ENCODE measurements at regions of chr12 and their contacts with region 1.

Region 1: GRCh38 chr12:28097221-28097620 is 93.0 kb upstream of the CCDC91 start:
- DNase-seq: no peak
- ATAC-seq: no peak
- H3K4me3 ChIP-seq: no peak overlapping the region
- H3K27ac ChIP-seq: no peak overlapping the region
- H3K4me1 ChIP-seq: no peaks in the 10 kb centered on the region
- H3K27me3 ChIP-seq: peaks cover 0 to 3% (median 0%) of the 10 kb centered on the region in 7 donors
- CTCF ChIP-seq: no peak

Region 2: DNA sequence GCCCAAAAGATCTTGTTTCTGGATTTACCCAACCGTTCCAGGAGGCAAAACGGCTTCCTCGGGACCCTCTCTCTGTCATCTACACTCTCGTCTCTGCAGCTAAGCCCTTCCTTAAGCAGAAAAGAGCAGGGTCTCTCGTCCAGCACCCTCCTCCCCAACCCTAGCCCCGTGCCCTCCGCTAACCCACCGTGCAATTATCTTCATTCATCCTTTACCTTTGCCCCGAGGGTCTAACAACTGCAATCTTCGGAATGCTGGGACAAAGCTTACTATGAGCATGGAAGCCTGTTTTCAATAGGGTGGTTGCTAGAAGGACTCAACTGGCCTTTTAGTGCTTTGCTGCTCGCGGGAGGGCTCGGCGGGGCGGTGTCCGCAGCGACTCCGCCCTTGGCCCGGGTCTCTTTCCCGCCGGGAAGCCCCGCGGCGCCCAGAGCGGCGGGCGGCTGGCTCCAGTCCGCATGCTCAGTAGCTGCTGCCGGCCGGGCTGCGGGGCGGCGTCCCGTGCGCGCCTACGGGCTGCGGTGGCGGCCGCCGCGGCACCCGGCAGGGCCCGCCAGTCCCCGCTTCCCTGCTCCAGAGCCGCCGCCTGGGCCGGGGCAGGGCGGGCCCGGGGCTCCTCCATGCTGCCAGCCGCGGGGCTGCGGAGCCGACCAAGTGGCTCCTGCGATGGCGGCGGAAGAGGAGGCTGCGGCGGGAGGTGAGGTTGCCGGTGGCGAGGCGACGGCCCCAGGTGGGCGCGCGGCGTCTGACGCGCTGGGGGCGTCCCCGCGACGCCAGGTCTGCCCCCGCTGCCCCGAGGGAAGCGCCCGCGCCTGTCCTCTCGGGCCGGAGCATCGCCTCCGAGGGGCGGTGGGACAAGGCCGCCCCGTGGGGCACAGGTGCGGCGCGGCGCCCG is 764.6 kb before region 1 on chr12 and contains the start of gene BMAL2:
- intact Hi-C with region 1: no loop called
- DNase-seq: peak; percentile 11 to 46
- ATAC-seq: peak; percentile 60 to 82 (median 66)
- H3K4me3 ChIP-seq: peak within 1 kb of the TSS; percentile 57 to 85 (median 68)
- H3K27ac ChIP-seq: peak within 1 kb of the TSS in 2 of 10 donors; percentile 40 to 69
- H3K4me1 ChIP-seq: peaks cover 0 to 32% (median 9%) of the 10 kb centered on the region in 9 donors
- H3K27me3 ChIP-seq: peaks cover 0 to 21% (median 0%) of the 10 kb centered on the region in 7 donors
- CTCF ChIP-seq: no peak
- total RNA-seq, gene BMAL2: 1.1 to 9.4 (median 2.8) TPM

Region 3: DNA sequence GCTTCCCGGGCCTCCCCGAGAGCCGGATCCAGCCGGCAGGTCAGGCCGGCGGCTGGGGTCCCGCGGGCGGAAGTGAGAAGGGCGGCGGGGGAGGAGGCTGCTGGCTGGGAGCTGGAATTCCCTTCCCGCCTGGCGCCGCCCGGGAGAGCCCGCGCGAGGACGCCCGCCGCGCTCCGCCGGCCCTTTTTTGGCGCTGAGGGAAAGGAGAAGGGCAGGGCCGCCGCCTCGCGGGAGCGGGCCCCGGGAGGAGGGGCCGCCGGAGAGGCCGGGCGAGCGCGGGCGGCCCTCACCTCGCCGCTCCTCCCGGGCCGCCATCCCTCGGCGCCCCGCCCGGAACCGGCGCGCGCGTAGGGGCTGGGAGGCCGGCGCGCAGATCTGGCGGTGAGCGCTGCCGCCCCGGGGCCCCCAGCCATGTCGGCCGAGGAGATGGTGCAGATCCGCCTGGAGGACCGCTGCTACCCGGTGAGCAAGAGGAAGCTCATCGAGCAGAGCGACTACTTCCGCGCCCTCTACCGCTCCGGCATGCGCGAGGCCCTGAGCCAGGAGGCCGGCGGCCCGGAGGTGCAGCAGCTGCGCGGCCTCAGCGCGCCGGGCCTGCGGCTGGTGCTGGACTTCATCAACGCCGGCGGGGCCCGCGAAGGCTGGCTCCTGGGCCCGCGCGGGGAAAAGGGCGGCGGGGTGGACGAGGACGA is 317.2 kb before region 1 on chr12 and contains the starts of genes KLHL42 and MANSC4:
- intact Hi-C with region 1: no loop called
- DNase-seq: peak; percentile 74 to 78
- ATAC-seq: peak; percentile 88 to 96 (median 90)
- H3K4me3 ChIP-seq: peak within 1 kb of the TSS; percentile 72 to 95 (median 83)
- H3K27ac ChIP-seq: peak within 1 kb of the TSS; percentile 70 to 94 (median 89)
- H3K4me1 ChIP-seq: peaks cover 0 to 35% (median 28%) of the 10 kb centered on the region in 9 donors
- H3K27me3 ChIP-seq: no peaks in the 10 kb centered on the region
- CTCF ChIP-seq: peak in 4 of 9 donors; percentile 14 to 32 (median 22)
- total RNA-seq, gene KLHL42: 4.6 to 10.9 (median 6.7) TPM
- total RNA-seq, gene MANSC4: not detected

Region 4: DNA sequence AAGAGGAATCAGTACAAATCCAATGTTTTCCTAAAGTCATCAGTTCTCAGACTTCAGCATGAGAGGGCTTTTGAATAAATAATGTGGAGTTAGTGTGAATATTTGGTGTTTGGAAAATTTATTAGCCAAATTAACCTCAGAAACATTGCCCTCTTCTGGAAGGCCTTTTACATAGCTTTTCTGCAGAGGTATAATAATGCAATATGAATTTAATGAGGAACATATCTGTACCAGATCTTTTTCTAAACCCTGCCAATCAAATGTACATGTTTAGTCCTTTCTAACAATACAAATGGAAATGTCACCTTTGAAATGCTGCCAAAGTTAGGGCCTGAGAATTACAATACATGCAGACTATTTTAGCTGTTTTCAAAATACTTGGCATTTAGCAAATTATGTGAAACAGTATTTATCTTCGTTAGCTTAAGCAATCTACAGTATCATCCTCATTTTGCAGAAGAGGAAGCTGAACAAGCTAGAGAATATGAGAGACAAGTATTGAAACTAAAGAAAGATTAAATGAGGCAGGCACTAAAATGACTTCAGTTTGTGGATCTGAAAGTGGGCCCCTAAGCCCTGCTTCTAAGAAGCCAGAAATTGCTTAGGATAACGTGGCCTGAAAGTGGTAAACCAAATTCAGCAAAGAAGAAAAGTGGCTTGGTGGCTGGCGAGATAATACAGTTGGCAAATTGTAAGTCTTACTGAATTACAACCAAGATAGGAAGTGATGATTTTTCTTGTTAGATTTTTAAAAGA is 256.8 kb before region 1 on chr12:
- intact Hi-C with region 1: no loop called
- DNase-seq: no peak
- ATAC-seq: no peak
- H3K4me3 ChIP-seq: no peak overlapping the region
- H3K27ac ChIP-seq: no peak overlapping the region
- H3K4me1 ChIP-seq: peaks cover 0 to 19% (median 6%) of the 10 kb centered on the region in 9 donors
- H3K27me3 ChIP-seq: no peaks in the 10 kb centered on the region
- CTCF ChIP-seq: peak in 6 of 9 donors; percentile 9 to 35 (median 26)

Region 5: GRCh38 chr12:27984275-27984674 is 112.9 kb before region 1 on chr12:
- intact Hi-C with region 1: loop called in 1 of 10 experiments (anchors 10 kb)
- DNase-seq: no peak
- ATAC-seq: no peak
- H3K4me3 ChIP-seq: no peak overlapping the region
- H3K27ac ChIP-seq: no peak overlapping the region
- H3K4me1 ChIP-seq: peaks cover 0 to 3% (median 0%) of the 10 kb centered on the region in 9 donors
- H3K27me3 ChIP-seq: peaks cover 0 to 12% (median 0%) of the 10 kb centered on the region in 7 donors
- CTCF ChIP-seq: no peak

Measured in heart right ventricle (tissue), 16 donors.